Esophagus muscularis mucosa (tissue), 4 donors: ENCODE measurements at regions of chr6 and their contacts with region 1.

Region 1: GRCh38 chr6:34248727-34249551 is at the start of gene SMIM29:
- DNase-seq: peak; percentile 99
- H3K4me3 ChIP-seq: peak within 1 kb of the TSS; percentile 74 to 84 (median 80)
- H3K27ac ChIP-seq: peak within 1 kb of the TSS; percentile 84 to 91 (median 90)
- H3K4me1 ChIP-seq: peaks cover 28 to 45% (median 40%) of the 10 kb centered on the region in 4 donors
- H3K27me3 ChIP-seq: no peaks in the 10 kb centered on the region
- CTCF ChIP-seq: peak in 2 of 3 experiments; percentile 99
- EP300 ChIP-seq: no peak
- POLR2A ChIP-seq: peak; percentile 75
- total RNA-seq, gene SMIM29: 21.2 to 26.3 (median 23.4) TPM

Region 2: GRCh38 chr6:34044945-34045595 is 203.9 kb before region 1 on chr6:
- intact Hi-C with region 1: no loop called
- DNase-seq: no peak
- H3K4me3 ChIP-seq: no peak overlapping the region
- H3K27ac ChIP-seq: no peak overlapping the region
- H3K4me1 ChIP-seq: no peaks in the 10 kb centered on the region
- H3K27me3 ChIP-seq: peaks cover 0 to 62% (median 0%) of the 10 kb centered on the region in 4 donors
- CTCF ChIP-seq: no peak
- EP300 ChIP-seq: no peak
- POLR2A ChIP-seq: no peak

Region 3: DNA sequence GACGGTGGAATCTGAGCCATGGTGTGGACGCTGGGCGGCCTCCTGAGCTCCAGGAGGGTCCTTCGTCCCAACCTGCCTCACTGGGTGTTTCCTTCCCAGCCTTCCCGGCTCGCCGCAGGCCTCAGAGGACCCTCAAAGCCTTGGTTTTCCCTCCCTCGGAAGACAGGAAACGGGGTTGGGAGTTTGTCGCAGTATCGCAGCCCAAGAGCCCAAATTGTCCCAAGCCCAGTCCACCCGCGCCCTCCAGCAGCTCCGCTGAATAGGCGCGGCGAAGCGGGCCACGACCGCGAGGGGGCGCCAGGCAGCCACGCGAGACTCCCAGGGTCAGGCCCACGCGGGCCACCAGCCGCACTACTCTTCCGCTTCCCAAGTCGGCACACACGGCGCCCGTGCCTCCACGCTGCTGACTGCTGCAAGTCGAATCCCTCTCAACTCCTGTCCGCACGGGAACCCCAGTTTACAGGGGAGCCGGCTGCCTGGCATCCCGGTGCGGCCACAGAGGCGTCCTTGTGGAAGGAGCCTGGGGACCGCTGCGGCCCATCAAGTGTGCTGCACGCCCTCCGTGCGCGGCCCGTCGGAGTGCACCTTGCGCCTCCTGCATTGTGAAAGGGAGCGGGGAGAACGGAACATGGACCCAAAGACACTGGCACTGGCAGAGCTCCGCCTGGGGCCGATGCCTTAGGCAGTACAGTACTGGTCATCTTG is 52.7 kb before region 1 on chr6:
- intact Hi-C with region 1: loop called (anchors 2 kb)
- DNase-seq: peak; percentile 95
- H3K4me3 ChIP-seq: peak overlapping the region; percentile 54 to 61 (median 56)
- H3K27ac ChIP-seq: no peak overlapping the region
- H3K4me1 ChIP-seq: peaks cover 4 to 12% (median 11%) of the 10 kb centered on the region in 4 donors
- H3K27me3 ChIP-seq: no peaks in the 10 kb centered on the region
- CTCF ChIP-seq: peak; percentile 95 to 100 (median 96)
- EP300 ChIP-seq: no peak
- POLR2A ChIP-seq: no peak

Region 4: GRCh38 chr6:34295721-34296120 is 46.8 kb after region 1 on chr6:
- intact Hi-C with region 1: no loop called
- DNase-seq: no peak
- H3K4me3 ChIP-seq: no peak overlapping the region
- H3K27ac ChIP-seq: no peak overlapping the region
- H3K4me1 ChIP-seq: peaks cover 14 to 18% (median 17%) of the 10 kb centered on the region in 4 donors
- H3K27me3 ChIP-seq: no peaks in the 10 kb centered on the region
- CTCF ChIP-seq: no peak
- EP300 ChIP-seq: no peak
- POLR2A ChIP-seq: no peak

Region 5: DNA sequence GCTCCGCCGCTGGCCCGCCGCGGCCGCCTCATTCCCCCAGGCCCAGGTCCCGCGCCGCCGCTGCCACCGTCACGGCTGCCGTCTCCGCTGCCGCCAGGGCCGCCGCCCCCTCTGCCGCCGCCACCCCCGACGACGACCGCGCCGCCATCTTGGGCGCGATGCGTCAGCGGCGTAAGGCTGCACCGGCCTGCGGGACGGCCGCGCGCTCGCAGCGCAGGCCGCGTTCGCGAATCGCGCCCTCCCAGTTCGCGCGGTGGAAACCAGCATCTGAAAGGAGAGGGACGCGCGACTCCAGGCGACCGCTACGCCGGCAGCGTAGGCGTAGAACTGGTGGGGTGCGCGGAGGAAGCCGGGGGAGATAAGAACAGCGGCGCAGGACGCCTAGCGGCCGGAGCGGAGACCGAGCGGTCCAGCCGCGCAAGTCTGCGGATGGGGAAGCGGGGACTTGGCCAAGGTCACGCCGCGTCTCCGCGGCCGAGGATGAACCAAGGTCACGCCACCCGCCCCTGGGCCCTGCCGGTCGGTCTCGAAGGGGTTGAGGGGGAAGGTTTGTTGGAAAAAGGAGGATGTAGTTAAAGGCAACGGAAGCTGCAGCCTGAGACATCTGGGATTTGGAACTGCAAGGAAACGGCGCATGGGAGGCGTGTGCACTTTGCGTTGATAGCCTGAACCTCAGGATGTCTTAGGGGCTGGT is 143.7 kb after region 1 on chr6 and contains the start of gene NUDT3:
- intact Hi-C with region 1: loop called (anchors 2 kb)
- DNase-seq: peak; percentile 96
- H3K4me3 ChIP-seq: peak within 1 kb of the TSS; percentile 78 to 97 (median 93)
- H3K27ac ChIP-seq: peak within 1 kb of the TSS; percentile 92 to 98 (median 96)
- H3K4me1 ChIP-seq: peaks cover 42 to 57% (median 49%) of the 10 kb centered on the region in 4 donors
- H3K27me3 ChIP-seq: no peaks in the 10 kb centered on the region
- CTCF ChIP-seq: peak; percentile 68 to 83 (median 76)
- EP300 ChIP-seq: no peak
- POLR2A ChIP-seq: peak; percentile 15
- total RNA-seq, gene NUDT3: 37.1 to 57.2 (median 47.4) TPM

Region 6: DNA sequence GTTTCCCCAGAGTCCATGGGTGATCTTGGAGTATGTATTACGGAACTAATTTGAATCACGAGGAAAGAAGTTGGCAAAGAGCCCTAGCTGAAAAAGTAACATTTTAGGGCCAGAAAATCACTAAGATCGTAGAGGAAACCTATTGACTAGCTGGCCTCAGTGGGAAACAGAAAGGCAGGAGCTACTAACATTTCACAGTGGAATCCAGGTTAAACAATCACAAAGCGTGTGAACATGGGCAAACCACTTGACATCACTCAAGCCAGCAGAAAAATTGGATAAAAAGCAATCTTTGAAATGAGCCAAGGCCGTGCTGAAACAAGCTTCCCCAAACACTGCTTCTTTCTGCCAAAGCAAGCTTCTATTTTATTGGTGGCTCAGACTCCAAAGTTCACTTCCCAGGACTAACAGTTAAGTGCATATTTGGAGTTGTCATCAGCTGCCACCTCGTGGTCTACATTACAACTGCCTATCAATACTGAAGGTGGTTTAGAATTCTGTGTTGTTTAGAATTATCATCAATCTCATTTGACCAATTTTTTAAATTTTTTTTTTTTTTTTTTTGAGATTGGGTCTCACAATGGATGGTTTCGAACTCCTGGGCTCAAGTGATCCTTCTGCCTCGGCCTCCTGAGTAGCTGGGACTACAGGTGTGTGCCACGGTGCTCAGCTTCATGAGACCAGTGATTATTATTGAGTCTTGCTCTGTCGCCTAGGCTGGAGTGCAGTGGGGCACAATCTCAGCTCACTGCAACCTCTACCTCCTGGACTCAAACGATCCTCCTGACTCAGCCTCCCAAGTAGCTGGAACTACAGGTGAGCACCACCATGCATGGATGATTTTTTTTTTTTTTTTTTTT is 166.3 kb after region 1 on chr6:
- intact Hi-C with region 1: loop called (anchors 2 kb)
- DNase-seq: no peak
- H3K4me3 ChIP-seq: no peak overlapping the region
- H3K27ac ChIP-seq: peak overlapping the region; percentile 67 to 76 (median 72)
- H3K4me1 ChIP-seq: peaks cover 4 to 19% (median 12%) of the 10 kb centered on the region in 4 donors
- H3K27me3 ChIP-seq: no peaks in the 10 kb centered on the region
- CTCF ChIP-seq: peak; percentile 74 to 86 (median 76)
- EP300 ChIP-seq: no peak
- POLR2A ChIP-seq: no peak

Region 7: GRCh38 chr6:34602318-34603111 is 353.6 kb after region 1 on chr6:
- intact Hi-C with region 1: loop called (anchors 10 kb)
- DNase-seq: no peak
- H3K4me3 ChIP-seq: no peak overlapping the region
- H3K27ac ChIP-seq: no peak overlapping the region
- H3K4me1 ChIP-seq: peaks cover 37 to 60% (median 51%) of the 10 kb centered on the region in 4 donors
- H3K27me3 ChIP-seq: no peaks in the 10 kb centered on the region
- CTCF ChIP-seq: no peak
- EP300 ChIP-seq: no peak
- POLR2A ChIP-seq: no peak